ENCODE measurements at regions of chr12 and their contacts with region 1.

Region 1: DNA sequence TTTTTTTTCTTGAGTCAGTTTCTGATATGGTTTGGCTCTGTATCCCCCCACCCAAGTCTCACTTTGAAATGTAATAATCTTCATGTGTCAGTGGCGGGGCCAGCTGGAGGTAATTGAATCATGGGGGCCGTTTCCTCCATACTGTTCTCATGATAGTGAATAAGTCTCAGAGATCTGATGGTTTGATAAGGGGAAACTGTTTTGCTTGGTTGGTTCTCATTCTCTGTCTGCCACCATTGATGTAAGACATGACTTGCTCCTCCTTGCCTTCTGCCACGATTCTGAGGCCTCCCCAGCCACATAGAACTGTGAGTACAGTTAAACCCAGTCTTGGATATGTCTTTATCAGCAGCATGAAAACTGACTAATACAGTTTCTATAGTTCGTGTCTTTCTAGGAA is 42.9 kb downstream of the WNK1 start:
- DNase-seq: no peak
- H3K4me3 Mint-ChIP-seq: peak overlapping the region; percentile 6
- H3K27ac Mint-ChIP-seq: peak overlapping the region; percentile 87
- H3K4me1 Mint-ChIP-seq: peaks cover 64% of the 10 kb centered on the region
- H3K27me3 Mint-ChIP-seq: no peaks in the 10 kb centered on the region

Region 2: DNA sequence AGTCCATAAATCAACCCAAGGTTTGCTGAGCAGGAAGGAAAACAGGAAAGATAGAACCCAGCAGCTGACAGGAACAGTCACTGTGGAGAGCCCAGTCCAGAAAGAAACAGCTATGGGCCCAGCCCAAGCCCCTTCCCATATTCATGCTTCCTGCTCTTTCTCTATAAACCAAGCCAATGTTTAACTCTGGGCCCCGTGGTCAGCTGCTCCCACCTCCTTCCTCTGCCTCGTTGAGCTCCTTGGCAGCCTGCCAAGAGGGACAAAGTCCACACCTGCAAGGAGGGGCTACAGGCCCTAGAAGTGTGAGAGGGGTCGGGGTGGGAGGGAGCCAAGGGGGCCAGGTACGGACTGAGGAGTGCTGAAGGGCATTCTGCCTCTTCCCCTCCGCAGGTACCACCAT is 542.7 kb before region 1 on chr12:
- intact Hi-C with region 1: no loop called
- DNase-seq: no peak
- H3K4me3 Mint-ChIP-seq: no peak overlapping the region
- H3K27ac Mint-ChIP-seq: no peak overlapping the region
- H3K4me1 Mint-ChIP-seq: no peaks in the 10 kb centered on the region
- H3K27me3 Mint-ChIP-seq: peaks cover 10% of the 10 kb centered on the region

Region 3: DNA sequence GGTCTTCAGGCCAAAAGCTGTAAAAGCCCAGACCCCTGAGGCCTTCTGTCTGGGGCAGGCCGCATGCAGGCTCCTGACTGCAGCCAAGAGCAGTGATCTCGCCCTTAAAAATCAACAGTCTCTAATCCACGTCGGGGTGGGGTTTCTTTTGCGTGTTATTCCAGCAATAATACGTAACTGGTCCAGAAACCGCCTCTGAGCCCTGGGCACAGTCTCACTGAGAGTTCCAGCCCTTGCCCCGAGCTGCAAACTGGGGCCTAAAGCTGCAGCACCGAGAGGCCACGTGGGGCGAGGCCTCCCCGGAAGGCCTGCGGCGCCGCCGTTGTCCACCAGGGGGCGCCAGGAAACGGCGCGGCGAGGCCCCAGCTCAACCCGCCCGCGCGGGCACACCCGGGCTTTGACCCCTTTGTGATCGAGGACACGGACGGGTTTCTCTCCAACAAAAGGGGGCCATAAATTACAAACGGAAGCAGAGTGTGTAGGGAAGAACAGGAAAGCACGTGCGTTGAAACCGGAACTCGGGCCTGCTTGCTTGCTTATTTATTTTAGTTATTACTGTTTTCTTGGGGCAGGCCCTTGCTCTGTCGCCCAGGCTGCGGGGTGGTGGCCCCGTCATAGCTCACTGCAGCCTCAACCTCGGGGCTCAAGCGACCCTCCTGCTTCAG is 219.2 kb before region 1 on chr12:
- intact Hi-C with region 1: loop called (anchors 1 kb)
- DNase-seq: peak; percentile 81
- H3K4me3 Mint-ChIP-seq: no peak overlapping the region
- H3K27ac Mint-ChIP-seq: peak overlapping the region; percentile 80
- H3K4me1 Mint-ChIP-seq: peaks cover 33% of the 10 kb centered on the region
- H3K27me3 Mint-ChIP-seq: peaks cover 4% of the 10 kb centered on the region

Region 4: DNA sequence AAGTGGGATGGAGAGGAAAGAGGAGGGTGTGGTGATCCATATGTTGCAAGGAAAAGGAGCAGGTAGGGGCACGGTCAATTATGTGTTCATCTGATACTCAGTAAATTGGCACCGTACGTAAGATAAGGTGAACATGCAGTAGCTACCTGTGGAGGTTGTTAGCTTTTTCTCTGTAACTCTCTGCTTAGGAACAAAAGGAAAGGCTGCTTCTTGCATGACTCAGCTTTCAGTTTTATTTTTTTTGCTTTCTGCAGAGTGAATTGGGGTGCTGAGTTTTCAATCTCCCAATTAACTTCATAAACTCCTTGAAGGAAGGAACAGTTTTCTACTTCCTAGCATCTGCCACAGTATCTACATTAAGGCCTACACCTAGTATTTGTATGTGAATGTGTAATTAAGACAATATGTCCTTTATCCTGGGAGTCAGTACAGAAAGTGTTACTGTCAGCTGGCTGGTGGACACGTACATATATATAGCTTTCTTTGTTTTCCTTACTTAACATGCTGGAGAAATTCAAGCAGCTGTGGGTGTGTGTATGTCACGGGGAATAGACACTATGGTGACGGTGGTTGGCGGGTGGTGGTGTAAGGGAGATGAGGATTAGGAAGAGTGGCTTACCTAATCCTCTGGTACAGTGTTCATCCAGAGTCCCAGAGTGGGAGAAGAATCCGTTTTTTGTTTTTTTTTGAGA is 83.0 kb before region 1 on chr12:
- intact Hi-C with region 1: loop called (anchors 1 kb)
- DNase-seq: no peak
- H3K4me3 Mint-ChIP-seq: no peak overlapping the region
- H3K27ac Mint-ChIP-seq: peak overlapping the region; percentile 72
- H3K4me1 Mint-ChIP-seq: peaks cover 37% of the 10 kb centered on the region
- H3K27me3 Mint-ChIP-seq: no peaks in the 10 kb centered on the region

Region 5: DNA sequence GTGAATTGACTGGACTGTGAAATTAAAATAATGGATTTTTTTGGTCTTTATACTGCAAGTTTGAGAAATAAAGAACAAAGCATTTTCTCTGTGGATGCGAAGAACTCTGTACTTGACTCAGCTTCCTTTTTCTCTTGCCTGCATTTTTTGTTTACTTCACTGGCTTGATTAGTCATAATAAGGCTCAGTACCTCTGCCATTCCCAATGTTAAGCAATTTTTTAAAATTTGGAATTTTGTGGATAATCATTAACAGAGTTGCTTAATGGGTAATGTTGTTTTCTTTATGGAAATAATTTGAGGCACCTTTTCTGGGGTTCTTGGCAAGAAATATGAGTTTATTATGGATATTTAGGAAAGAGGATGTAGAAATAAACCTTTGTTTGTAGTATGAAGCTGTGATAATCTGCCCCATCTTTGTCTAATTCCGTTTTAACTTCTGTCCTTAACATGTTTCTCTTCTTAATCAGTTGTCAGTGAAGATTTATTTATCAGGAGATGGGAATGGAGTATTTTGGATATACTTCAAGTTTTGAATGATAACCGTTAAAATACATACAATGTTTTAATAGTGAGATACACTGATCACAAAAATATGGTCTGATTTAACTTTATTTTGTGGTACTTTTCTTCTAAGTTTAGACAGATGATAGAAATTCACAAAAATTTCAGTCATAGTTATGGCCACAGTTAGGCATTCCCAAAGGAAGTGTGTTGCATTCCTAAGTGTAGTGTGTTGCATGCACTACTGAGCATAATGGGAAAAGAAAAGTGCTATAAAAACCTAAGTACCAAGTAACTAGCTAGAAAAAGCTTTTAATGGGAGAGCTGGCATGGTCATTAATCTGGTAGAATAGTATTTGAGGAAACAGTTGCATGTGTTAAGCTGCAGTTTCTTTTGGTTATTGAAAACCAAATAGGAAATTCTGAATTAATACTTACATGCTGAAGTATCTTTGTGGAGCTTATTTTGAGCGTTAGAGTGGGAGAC is 15.3 kb before region 1 on chr12:
- intact Hi-C with region 1: loop called (anchors 2 kb)
- DNase-seq: no peak
- H3K4me3 Mint-ChIP-seq: peak overlapping the region; percentile 62
- H3K27ac Mint-ChIP-seq: peak overlapping the region; percentile 67
- H3K4me1 Mint-ChIP-seq: peaks cover 54% of the 10 kb centered on the region
- H3K27me3 Mint-ChIP-seq: no peaks in the 10 kb centered on the region

Region 6: DNA sequence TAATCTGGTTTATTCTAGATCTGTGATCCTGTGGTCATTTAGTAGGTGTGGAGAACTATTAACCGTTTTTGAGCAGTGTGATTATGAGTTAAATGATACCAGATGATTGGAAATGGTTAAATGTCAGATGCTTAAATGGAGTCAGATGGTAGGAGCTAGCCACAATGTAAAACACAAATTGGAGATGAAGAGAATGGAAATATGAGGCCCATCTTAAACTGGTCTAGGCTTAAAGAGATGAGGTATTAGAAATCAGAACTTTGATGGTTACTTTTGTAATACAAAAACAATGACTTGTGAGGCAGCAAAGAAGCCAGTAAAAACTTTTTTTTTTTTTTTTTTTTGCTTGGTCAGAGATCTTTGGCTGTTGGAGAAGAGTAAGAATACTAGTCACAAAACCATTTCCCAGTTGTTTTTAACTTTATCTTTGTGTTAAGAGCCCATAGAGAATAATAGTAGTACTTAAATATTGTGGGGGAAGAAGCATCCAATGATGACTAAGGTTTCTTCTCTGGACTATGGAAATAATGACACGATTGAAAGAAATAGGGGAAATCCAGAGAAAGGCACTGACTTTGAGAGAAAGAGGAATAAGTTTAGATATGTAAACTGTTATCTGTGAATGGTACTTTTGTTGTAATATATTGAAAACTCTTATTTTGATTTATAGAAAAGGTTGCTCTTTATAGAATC is 53.0 kb after region 1 on chr12:
- intact Hi-C with region 1: loop called (anchors 1 kb)
- DNase-seq: no peak
- H3K4me3 Mint-ChIP-seq: peak overlapping the region; percentile 13
- H3K27ac Mint-ChIP-seq: peak overlapping the region; percentile 81
- H3K4me1 Mint-ChIP-seq: peaks cover 52% of the 10 kb centered on the region
- H3K27me3 Mint-ChIP-seq: no peaks in the 10 kb centered on the region

Region 7: DNA sequence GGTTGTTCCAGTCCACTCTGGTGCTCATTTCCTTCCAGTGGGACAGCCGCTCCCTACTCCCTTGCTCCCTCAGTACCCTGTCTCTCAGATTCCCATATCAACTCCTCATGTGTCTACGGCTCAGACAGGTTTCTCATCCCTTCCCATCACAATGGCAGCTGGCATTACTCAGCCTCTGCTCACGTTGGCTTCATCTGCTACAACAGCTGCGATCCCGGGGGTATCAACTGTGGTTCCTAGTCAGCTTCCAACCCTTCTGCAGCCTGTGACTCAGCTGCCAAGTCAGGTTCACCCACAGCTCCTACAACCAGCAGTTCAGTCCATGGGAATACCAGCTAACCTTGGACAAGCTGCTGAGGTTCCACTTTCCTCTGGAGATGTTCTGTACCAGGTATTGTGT is 84.3 kb after region 1 on chr12:
- intact Hi-C with region 1: no loop called
- DNase-seq: no peak
- H3K4me3 Mint-ChIP-seq: no peak overlapping the region
- H3K27ac Mint-ChIP-seq: no peak overlapping the region
- H3K4me1 Mint-ChIP-seq: peaks cover 7% of the 10 kb centered on the region
- H3K27me3 Mint-ChIP-seq: no peaks in the 10 kb centered on the region

Region 8: DNA sequence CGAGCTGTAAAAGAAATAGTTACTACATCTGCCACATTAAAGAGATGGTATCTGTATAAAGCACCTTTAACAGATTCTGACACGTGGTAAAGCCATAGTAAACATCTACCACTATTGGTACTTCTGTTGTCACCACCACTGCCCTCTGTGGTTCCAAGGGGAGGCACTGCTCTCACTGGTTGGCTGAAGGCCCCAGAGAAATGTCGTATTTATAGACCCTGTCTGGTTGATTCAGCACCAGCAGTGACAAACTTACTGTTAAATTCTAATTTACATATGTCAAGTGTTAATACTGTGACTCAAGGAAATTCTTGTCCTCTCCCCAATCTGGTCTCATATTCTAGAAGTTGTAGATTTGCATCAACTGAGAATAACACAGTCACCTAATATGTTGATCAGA is 476.8 kb after region 1 on chr12:
- intact Hi-C with region 1: no loop called
- DNase-seq: no peak
- H3K4me3 Mint-ChIP-seq: no peak overlapping the region
- H3K27ac Mint-ChIP-seq: no peak overlapping the region
- H3K4me1 Mint-ChIP-seq: peaks cover 8% of the 10 kb centered on the region
- H3K27me3 Mint-ChIP-seq: no peaks in the 10 kb centered on the region